ENCODE measurements at regions of chr12 and their contacts with region 1.

Region 1: DNA sequence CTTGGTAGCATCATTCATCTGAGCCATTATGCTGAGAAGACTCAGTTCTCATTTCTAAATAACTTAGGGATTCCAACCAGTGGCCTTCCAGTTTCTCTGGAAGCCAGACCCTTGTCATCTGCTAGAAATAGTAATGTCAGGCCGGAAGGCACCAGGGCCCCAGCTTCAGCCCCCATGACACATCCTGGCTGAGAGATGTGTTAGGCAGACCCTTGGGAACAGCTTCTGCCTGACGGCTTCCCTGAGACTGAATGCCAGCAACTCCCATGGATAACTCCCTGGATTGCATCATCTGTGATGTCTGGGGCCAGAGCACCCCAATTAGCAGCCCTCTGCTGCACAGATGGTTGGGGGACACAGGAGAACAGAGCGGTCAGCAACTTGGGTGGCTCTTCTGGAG is 583.5 kb upstream of the TBX3 start:
- DNase-seq: peak in 1 of 2 donors; percentile 13
- ATAC-seq: peak in 5 of 8 donors; percentile 25 to 87 (median 47)
- H3K4me3 ChIP-seq: no peak overlapping the region
- H3K27ac ChIP-seq: no peak overlapping the region
- H3K4me1 ChIP-seq: no peaks in the 10 kb centered on the region
- H3K27me3 ChIP-seq: no peaks in the 10 kb centered on the region
- CTCF ChIP-seq: no peak

Region 2: DNA sequence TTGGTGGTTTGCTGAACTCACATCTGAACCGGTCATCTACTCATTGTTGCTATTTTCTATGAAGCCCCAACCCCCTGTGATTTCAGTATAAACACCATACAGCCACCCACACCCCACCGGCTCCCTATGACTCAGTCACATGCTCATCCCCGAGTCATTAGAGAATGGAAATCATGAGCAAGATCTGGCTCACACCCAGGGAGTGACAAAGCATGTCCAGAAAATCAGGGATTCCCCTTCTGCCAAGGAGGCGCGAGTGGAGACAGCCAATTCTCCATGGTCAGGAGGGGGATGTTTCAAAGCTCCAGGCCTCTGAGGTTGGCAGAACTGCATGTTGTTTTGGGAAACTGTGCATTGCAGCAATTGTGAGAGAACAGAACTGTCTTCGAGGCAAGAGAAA is 74.0 kb after region 1 on chr12:
- intact Hi-C with region 1: loop called in 1 of 10 experiments (anchors 5 kb)
- DNase-seq: peak; percentile 23 to 81
- ATAC-seq: peak; percentile 55 to 82 (median 64)
- H3K4me3 ChIP-seq: no peak overlapping the region
- H3K27ac ChIP-seq: peak overlapping the region in 6 of 10 donors; percentile 21 to 76 (median 50)
- H3K4me1 ChIP-seq: peaks cover 0 to 27% (median 11%) of the 10 kb centered on the region in 9 donors
- H3K27me3 ChIP-seq: no peaks in the 10 kb centered on the region
- CTCF ChIP-seq: no peak